Mucosa of descending colon (tissue), 3 donors: ENCODE measurements at regions of chr4 and their contacts with region 1.

Region 1: GRCh38 chr4:79042079-79042674 is 102.9 kb upstream of the PAQR3 start:
- DNase-seq: peak in 1 of 3 donors; percentile 64
- ATAC-seq: no peak
- H3K4me3 ChIP-seq: no peak overlapping the region
- H3K4me1 ChIP-seq: no peaks in the 10 kb centered on the region
- CTCF ChIP-seq: no peak

Region 2: GRCh38 chr4:77065382-77065781 is 1976.8 kb before region 1 on chr4:
- intact Hi-C with region 1: no loop called
- DNase-seq: no peak
- ATAC-seq: no peak
- H3K4me3 ChIP-seq: no peak overlapping the region
- H3K4me1 ChIP-seq: no peaks in the 10 kb centered on the region
- CTCF ChIP-seq: no peak

Region 3: GRCh38 chr4:79576429-79576753 is 534.2 kb after region 1 on chr4:
- intact Hi-C with region 1: loop called in 1 of 2 experiments (anchors 5 kb)
- DNase-seq: peak in 1 of 3 donors; percentile 30
- ATAC-seq: peak; percentile 65
- H3K4me3 ChIP-seq: no peak overlapping the region
- H3K4me1 ChIP-seq: no peaks in the 10 kb centered on the region
- CTCF ChIP-seq: no peak

Region 4: GRCh38 chr4:80215449-80216052 is 1173.4 kb after region 1 on chr4:
- intact Hi-C with region 1: loop called in 1 of 2 experiments (anchors 10 kb)
- DNase-seq: no peak
- ATAC-seq: no peak
- H3K4me3 ChIP-seq: no peak overlapping the region
- H3K4me1 ChIP-seq: no peaks in the 10 kb centered on the region
- CTCF ChIP-seq: peak; percentile 35